Left ventricle myocardium superior (tissue), 1 donor: ENCODE measurements at regions of chr20 and their contacts with region 1.

Region 1: GRCh38 chr20:266596-267562 is 9.4 kb downstream of the DEFB132 start:
- DNase-seq: peak; percentile 91
- ATAC-seq: peak; percentile 97

Region 2: DNA sequence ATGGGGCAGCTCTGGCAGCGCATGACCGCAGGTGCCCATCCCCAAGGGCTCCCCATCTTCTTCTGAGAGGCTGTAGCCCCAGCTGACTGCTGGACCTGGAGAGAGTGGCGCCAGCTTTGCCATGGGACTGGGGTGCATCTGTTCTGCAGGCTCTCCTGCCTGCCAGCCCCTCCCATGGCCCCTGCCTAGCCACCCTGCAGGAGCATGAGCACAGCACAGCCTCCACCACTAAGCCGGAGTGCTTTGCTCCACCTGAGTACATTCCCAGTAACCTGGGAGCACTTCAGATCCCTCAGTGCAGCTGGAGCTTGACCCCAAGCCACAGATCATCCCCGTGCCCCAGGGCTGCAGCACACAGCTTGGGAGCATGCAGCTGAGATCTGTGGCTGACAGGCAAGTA is 163.4 kb before region 1 on chr20:
- intact Hi-C with region 1: loop called (anchors 5 kb)
- DNase-seq: no peak
- ATAC-seq: no peak